Head of caudate nucleus (tissue), 42 donors: ENCODE measurements at regions of chr13 and their contacts with region 1.

Region 1: DNA sequence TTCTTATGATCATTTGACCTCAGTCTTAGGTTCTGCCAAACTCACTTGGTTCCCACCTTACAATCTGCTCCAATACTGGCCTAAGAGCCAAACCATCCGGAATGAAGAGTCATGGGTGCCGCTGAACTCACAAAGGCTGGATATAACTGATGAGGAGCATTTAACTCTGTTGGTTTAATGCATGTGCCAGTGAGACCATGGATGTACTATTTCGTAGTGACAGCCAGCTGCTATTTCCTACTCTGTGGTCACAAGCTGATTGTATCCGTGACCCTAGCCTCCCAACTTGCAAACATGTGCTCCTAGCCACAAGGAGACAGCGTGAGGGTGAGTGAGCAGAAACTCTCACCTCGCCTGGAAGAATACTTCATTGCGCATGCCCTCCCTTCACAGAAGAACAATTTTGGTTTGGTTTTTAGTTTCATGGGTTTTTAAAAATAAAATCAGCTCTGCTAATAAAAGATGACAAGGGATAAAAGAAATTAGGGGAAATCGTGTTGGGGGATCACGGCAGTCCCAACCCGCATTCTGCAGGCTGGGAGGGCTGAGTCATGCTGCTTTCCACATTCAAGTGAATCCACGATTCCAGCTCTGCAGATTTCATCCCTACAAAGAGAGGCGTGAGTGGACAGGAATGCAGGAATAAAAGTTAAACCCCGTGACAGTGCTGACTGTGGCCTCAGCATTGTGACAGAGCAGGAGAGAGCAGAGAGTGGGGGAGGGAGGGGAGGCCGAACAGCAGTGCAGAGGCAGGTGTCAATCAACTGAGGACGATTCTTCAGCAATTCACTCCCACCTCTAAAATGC is 66.8 kb upstream of the RAP2A start:
- DNase-seq: peak in 24 of 42 donors; percentile 16 to 75 (median 41)

Region 2: DNA sequence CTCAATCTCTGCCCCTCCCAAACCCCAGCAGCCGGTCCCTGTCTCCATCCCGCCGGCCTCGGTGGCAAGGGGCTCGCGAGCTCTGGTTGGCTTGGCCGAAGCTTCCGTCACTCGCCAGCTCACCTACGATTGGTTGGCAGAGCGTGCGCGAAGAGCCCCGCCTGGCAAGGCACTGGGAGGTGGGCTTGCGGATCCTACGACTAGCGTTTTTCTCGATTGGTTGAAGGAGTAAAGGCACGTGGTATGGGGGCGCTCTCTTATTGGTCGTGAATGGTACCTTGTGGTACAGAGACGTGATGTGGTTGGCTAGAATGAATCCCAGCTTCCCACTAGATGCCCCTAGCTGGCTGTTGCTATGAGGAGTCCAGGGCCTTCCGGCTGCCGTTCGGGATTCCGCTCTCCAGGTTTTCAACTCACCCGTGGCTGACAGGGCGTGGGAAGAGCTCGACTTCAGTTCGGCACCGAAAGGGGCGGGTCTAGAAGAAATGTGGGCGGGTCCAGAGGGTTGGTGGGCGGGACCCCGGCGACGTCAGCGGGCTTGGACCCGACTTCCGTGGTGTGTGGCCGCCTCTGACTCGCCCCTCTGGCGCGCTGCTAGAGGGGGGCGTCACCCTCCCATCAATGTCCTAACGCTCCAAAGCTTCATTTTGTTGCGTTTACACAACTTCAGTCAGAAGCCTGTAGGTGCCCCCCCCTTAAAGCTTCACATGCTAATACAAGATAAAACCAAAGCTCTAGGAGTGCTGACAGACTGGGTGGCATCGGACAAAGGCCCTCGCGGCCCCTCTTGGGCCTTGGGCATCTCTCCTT is 65.9 kb after region 1 on chr13:
- intact Hi-C with region 1: loop called (anchors 5 kb)
- DNase-seq: peak; percentile 97 to 100 (median 99)